Motor neuron (in vitro differentiated cells): ENCODE measurements at regions of chr12 and their contacts with region 1.

Region 1: DNA sequence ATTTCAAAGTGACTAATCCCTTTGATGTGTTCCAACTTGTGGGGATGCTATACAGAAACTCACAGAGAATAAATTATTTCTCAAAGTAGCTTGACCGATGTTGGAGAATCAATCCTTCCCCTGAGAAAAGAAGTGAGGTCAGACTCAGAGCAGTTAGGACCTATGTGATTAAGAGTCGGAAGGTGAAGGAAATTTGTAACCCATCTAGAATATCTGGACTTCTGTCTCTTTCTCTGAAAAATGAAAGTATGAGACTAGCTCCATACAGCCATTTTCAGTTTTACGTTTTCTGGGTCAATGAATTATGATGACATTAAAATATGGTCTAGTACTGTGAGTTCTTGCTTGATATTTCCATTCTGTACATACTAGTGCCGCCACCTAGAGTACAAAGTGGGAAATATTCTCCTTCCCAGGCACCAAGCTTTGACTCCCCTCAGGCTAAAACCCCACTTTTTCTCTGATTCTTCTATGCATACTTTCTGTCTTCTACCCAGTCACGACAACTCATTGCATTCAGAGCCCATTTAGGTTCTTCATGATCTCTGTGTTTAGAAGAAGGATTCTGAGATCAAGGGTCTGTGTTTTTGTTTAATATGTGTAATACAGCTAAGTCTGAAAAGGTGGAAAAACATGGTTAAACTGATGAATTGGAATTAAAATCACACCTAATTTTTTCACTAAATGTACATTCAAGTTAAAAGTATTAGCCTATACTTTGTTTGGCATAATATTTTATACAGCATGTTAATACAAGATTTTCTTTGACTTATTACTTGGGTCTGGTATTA is 6.9 kb upstream of the NTS start:
- ATAC-seq: peak in 5 of 8 experiments; percentile 27 to 90 (median 79)
- H3K4me3 ChIP-seq: no peak overlapping the region
- H3K27ac ChIP-seq: no peak overlapping the region
- H3K4me1 ChIP-seq: no peaks in the 10 kb centered on the region

Region 2: DNA sequence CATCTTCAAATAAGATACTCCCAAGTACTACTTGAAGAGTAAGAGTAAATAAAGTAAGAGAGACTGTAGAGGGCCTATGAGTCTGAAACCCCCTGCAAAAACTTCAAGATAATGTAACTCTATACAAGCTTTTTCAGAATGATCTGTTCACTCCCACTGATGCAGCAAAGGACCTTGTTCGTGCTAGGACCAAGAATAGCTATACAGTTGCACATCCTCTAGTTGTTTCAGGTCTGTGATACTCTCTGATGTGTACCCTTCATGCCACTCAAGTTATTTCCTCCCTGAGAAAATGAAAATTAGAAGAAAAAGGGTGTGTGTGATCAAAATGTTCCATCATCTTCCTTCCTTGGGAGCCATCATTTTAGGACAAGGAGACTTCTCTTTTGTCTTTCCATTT is 382.8 kb before region 1 on chr12:
- in situ Hi-C with region 1: loop called in 6 of 9 experiments (anchors 25 kb)
- ATAC-seq: no peak
- H3K4me3 ChIP-seq: no peak overlapping the region
- H3K27ac ChIP-seq: no peak overlapping the region
- H3K4me1 ChIP-seq: no peaks in the 10 kb centered on the region

Region 3: GRCh38 chr12:85507456-85507855 is 359.7 kb before region 1 on chr12:
- in situ Hi-C with region 1: no loop called
- ATAC-seq: no peak
- H3K4me3 ChIP-seq: no peak overlapping the region
- H3K27ac ChIP-seq: no peak overlapping the region
- H3K4me1 ChIP-seq: no peaks in the 10 kb centered on the region

Region 4: DNA sequence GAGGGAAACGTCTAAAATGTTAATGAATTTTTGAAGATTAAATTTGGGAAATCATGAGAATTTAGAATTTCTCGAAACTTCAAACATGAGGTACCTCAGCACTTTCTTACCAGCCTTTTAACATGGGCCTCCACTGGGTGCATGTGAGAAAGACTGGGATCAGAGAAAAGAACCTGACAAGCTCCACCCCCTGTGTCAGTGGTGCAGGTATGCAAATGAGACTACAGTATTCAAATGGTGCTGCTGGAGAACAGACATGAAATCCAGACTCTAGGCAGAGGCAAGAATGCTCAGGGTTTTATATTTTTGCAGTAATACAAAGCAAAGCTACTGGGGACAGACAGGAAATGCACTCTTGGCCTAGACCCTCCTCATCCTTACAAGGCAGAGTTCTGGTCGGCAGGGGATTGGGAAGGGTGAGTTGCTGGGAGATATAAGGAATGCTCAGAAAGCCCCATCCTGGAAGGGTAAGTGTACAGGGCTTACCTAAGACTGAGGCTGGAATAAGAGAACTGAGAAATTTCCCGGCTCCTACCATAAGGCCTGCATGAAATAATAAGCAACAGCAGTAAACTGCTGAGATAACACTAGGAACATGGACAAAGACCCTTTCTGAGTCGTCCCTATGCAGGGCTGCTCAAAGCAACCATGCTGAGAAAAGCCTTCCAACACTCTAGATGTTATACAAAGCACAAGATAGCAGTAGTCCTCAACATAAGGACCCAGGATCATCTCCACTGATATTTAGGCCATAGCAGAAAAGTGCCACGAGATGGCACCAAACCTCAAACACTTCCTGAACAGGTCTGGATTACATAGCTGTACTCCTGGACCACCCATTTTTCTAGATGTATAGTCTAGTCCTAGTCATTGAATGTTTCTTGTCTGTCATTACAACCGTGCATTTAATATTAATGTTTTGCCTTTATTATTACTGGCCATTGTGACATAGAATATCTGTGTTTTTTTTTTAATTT is 291.8 kb before region 1 on chr12:
- in situ Hi-C with region 1: loop called in 4 of 9 experiments (anchors 5 to 25 kb)
- ATAC-seq: peak; percentile 40 to 100 (median 78)
- H3K4me3 ChIP-seq: no peak overlapping the region
- H3K27ac ChIP-seq: no peak overlapping the region
- H3K4me1 ChIP-seq: no peaks in the 10 kb centered on the region

Region 5: DNA sequence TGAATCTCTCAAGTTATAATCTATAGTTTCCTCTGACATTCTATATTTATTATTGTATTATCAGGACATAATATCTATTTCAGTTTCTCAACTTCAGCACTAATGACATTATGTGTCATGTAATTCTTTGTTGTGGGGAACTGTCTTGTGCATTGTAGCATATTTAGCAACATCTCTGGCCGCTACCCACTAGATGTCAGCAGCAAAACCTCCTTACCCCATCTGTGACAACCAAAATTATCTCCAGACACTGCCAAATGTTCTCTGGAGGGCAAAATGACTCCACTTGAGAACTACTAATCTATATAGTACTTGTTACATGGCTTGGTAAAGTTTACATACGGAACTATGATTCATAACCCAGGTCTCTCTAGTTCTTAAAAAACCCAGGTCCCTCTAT is 141.2 kb before region 1 on chr12:
- in situ Hi-C with region 1: loop called in 1 of 9 experiments (anchors 10 kb)
- ATAC-seq: peak in 1 of 8 experiments; percentile 23
- H3K4me3 ChIP-seq: no peak overlapping the region
- H3K27ac ChIP-seq: no peak overlapping the region
- H3K4me1 ChIP-seq: no peaks in the 10 kb centered on the region